ENCODE measurements at regions of chr15 and their contacts with region 1.

Region 1: GRCh38 chr15:72685925-72686794 is at the starts of genes BBS4 and HIGD2B:
- DNase-seq: peak; percentile 91
- H3K4me3 Mint-ChIP-seq: peak within 1 kb of the TSS; percentile 89
- H3K27ac Mint-ChIP-seq: peak within 1 kb of the TSS; percentile 87
- H3K4me1 Mint-ChIP-seq: peaks cover 15% of the 10 kb centered on the region
- H3K27me3 Mint-ChIP-seq: no peaks in the 10 kb centered on the region
- total RNA-seq, gene BBS4: 16.3 to 17.4 TPM
- total RNA-seq, gene HIGD2B: 0.19 to 0.27 TPM

Region 2: DNA sequence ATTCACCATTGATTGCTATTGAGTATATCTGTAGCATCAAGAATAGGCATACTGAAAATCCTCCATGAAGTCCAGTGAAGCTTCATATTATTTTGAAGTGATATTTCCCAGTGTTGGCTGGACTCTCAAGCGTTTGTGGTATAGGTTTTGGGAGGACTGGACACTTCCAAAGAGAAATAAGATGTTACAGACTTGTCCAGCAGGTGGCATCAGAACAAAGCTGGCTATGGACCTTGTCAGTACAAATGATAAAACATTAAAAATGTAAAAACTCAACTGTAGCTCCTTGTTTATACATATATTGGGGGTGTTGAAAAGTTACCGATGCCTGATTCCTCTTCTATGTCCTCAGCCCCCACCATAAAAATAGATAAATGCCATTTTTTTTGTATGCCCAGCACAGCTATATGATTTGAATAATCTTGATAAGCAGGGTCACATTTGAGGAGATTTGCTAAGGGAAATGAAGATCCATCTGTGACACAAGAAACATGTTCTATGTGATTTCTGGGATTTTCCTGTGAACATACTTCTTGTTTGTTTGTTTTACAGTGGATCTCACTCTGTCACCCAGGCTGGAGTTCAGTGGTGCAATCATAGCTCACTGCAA is 86.2 kb before region 1 on chr15:
- CTCF ChIA-PET with region 1: no interaction called
- intact Hi-C with region 1: loop called (anchors 10 kb)
- DNase-seq: peak; percentile 56
- H3K4me3 Mint-ChIP-seq: no peak overlapping the region
- H3K27ac Mint-ChIP-seq: no peak overlapping the region
- H3K4me1 Mint-ChIP-seq: no peaks in the 10 kb centered on the region
- H3K27me3 Mint-ChIP-seq: no peaks in the 10 kb centered on the region

Region 3: GRCh38 chr15:72740219-72740618 is 54.1 kb after region 1 on chr15:
- CTCF ChIA-PET with region 1: no interaction called
- intact Hi-C with region 1: loop called (anchors 5 kb)
- DNase-seq: no peak
- H3K4me3 Mint-ChIP-seq: no peak overlapping the region
- H3K27ac Mint-ChIP-seq: peak overlapping the region; percentile 59
- H3K4me1 Mint-ChIP-seq: peaks cover 32% of the 10 kb centered on the region
- H3K27me3 Mint-ChIP-seq: no peaks in the 10 kb centered on the region

Region 4: DNA sequence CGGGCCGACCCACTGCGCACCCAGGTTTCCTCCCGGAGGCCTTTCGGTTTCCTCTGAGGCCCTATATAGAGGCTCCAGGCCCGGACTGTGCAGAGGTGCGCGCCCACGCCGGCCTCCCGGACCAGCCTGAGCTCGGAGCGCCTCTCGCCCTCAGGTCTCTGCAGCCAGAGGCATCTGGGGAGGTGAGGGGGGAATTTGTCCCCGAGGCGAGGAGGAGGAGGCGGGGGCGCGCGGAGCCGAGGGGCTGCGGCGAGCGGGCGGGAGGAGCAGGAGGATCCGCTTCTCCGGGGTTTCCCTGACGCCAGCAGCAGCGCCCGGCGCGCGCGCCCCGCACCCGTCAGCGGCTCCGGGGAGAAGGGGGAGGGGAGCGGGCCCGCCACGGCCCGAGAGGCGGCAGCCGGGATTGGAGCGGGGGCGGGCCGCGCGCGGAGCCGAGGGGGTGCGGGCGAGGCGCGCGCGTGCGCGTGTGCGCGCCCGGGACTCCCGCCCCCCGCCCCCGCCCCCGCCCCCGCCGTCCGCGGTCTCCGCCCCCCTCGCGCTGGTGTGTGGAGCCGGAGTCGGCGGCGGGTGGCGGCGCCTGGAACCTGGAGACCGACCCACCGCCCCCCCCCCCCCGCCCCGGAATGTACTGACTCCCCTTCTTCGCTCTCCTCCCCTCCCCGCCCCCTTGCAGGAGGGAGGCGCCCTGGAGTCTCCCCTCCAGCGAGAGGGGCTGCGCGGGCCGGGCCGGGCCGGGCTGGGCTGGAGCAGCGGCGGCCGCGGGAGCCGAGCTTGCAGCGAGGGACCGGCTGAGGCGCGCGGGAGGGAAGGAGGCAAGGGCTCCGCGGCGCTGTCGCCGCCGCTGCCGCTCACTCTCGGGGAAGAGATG is 365.9 kb after region 1 on chr15 and contains the start of gene NEO1:
- CTCF ChIA-PET with region 1: no interaction called
- intact Hi-C with region 1: loop called (anchors 1 kb)
- DNase-seq: peak; percentile 81
- H3K4me3 Mint-ChIP-seq: peak within 1 kb of the TSS; percentile 77
- H3K27ac Mint-ChIP-seq: no peak within 1 kb of the TSS
- H3K4me1 Mint-ChIP-seq: peaks cover 6% of the 10 kb centered on the region
- H3K27me3 Mint-ChIP-seq: peaks cover 8% of the 10 kb centered on the region
- total RNA-seq, gene NEO1: 4.3 to 4.4 TPM

Region 5: DNA sequence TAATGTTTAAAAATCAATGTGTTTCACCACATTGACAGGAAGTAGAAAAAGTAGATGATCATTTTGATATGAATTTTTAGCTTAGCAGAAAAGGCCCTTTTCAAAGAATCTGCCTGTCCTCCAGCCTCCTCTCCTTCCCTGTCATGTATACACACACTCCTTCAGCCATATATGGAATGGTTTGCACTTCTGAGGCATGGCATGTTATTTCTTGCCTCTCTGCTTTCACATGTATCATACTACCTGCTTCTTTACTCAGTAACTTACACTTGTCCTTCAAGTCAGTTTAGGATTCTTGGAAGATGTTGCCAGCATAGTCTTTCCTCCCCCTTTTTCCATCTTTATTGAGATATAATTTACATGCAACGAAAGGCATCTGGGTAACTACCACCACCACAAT is 835.9 kb after region 1 on chr15:
- CTCF ChIA-PET with region 1: no interaction called
- intact Hi-C with region 1: no loop called
- DNase-seq: no peak
- H3K4me3 Mint-ChIP-seq: no peak overlapping the region
- H3K27ac Mint-ChIP-seq: no peak overlapping the region
- H3K4me1 Mint-ChIP-seq: no peaks in the 10 kb centered on the region
- H3K27me3 Mint-ChIP-seq: no peaks in the 10 kb centered on the region